ENCODE measurements at regions of chr2 and their contacts with region 1.

Region 1: GRCh38 chr2:139045524-139045923 is 265.3 kb upstream of the NXPH2 start:
- DNase-seq: no peak

Region 2: GRCh38 chr2:139007130-139007529 is 38.4 kb before region 1 on chr2:
- in situ Hi-C with region 1: loop called (anchors 5 kb)
- DNase-seq: no peak